AG04449 (cell line): ENCODE measurements at regions of chr22 and their contacts with region 1.

Region 1: GRCh38 chr22:31302006-31302405 is 9.7 kb upstream of the PIK3IP1 start:
- DNase-seq: no peak
- H3K4me3 ChIP-seq: no peak overlapping the region
- CTCF ChIP-seq: no peak

Region 2: GRCh38 chr22:31290494-31291471 is 11.2 kb before region 1 on chr22:
- CTCF ChIA-PET with region 1: interaction called, 262 read pairs
- POLR2A ChIA-PET with region 1: no interaction called
- DNase-seq: no peak
- H3K4me3 ChIP-seq: peak overlapping the region; percentile 56
- CTCF ChIP-seq: no peak